ENCODE measurements at regions of chr17 and their contacts with region 1.

Region 1: DNA sequence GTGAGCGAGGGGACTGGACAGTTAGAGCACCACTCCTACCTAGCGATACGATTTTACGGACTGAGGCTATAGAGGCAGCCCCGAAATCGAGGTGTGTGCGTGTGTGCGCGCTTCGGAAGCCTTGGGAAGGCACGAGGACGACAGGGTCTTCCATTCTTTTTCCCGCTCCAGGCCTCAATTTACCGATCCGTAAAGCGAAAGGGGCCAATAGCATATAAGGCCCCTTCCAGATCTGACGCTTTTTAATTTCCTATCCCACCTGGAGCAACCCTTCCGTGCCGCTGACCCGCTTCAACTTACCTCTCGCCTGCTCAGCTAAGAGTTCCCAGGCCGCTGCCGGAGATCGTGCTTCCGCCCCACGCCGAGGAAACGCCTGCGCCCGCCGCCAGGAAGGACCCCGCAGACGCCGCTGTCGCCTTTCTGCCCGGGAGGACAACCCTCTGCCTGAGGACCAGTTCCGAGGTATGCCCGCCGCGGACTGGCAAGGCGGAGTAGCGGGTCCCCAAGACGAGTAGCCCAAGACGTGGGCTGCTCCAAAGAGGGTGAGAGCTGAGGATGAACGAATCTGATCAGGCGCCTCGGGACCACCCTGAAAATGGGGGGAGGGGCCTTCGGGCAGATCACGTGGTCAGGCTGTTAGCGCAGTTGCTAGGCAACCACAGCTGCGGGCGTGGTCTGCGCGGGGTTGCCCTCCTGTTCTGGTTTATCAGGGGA is at the start of gene EFTUD2:
- DNase-seq: peak; percentile 94 to 96
- ATAC-seq: peak; percentile 83 to 85
- H3K4me3 ChIP-seq: peak within 1 kb of the TSS; percentile 65
- H3K27ac ChIP-seq: peak within 1 kb of the TSS; percentile 87 to 96
- H3K4me1 ChIP-seq: peaks cover 37% of the 10 kb centered on the region
- CTCF ChIP-seq: no peak
- EP300 ChIP-seq: peak in 1 of 2 experiments; percentile 25; a peak in 1 of 5 replicates
- POLR2A ChIP-seq: peak; percentile 85
- RAD21 ChIP-seq: peak in 1 of 2 experiments; percentile 18; a peak in 2 of 5 replicates
- polyA plus RNA-seq, gene EFTUD2: 254 and 353 TPM in 2 replicates

Region 2: DNA sequence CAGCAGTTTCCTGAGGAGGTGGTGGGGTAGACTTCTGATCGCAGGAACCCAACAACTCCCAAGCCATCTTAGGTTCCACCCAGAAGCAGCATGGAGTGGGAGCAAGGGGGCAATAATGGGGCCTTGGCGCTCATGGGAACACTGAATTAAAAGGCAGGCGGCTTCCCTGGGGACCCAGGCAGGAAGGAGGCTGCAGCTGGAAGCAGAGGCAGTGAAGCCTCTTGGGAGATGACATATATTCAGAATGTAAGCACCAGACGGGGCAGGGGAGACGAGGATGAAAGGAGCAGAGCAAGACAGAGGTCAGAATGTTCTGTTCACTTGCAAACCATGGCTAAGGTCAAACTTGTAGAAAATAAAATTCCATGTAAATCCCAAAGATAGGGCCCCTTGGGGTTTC is 48.6 kb before region 1 on chr17:
- CTCF ChIA-PET with region 1: no interaction called
- POLR2A ChIA-PET with region 1: no interaction called
- DNase-seq: no peak
- ATAC-seq: no peak
- H3K4me3 ChIP-seq: no peak overlapping the region
- H3K27ac ChIP-seq: no peak overlapping the region
- H3K4me1 ChIP-seq: no peaks in the 10 kb centered on the region
- CTCF ChIP-seq: no peak
- EP300 ChIP-seq: no peak
- POLR2A ChIP-seq: no peak
- RAD21 ChIP-seq: no peak

Region 3: DNA sequence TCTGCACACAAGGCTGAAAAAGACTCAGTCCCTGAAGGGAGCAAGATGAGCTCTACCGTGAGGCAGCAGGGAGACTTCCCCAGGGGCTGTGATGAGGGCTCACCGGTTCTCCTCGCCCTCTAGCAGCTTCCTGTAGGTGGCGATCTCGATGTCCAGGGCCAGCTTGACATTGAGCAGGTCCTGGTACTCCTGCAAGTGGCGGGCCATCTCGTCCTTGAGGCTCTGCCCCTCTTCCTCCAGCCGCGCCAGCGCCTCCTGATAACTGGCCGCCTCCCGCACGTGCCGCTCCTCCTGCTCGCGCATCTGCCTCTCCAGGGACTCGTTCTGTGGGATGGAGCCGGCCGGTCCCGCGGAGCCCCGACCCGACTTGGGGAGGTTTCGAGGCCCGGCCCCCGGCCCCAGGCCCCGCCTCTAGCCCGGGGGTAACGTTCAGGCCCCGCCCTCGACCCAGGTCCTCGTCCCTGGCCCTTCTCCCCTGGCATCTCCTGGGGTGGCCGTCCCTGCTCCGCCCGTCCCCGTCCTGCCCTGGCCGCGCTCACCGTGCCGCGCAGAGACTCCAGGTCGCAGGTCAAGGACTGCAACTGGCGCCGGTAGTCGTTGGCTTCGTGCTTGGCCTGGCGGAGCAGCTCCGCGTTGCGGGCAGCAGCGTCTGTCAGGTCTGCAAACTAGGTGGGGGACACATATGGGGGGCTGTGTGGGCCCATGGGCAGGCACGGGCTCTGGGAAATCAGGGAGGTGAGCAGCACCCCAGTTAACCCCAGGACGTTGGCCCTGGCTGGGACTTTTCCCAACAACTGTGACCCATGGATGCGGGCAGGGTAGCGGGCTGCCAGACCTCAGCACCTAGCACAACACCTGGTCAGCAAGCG is 12.1 kb after region 1 on chr17:
- CTCF ChIA-PET with region 1: interaction called, 217 read pairs
- POLR2A ChIA-PET with region 1: interaction called, 18 read pairs
- DNase-seq: peak; percentile 87 to 95
- ATAC-seq: peak; percentile 64 to 92
- H3K4me3 ChIP-seq: no peak overlapping the region
- H3K27ac ChIP-seq: peak overlapping the region; percentile 36 to 91; a peak in 4 of 6 replicates
- H3K4me1 ChIP-seq: peaks cover 46% of the 10 kb centered on the region
- CTCF ChIP-seq: peak; percentile 66
- EP300 ChIP-seq: no peak
- POLR2A ChIP-seq: no peak
- RAD21 ChIP-seq: peak; percentile 43 to 55

Measured in A549 (cell line).